Posterior cingulate gyrus (tissue), 11 donors: ENCODE measurements at regions of chr16 and their contacts with region 1.

Region 1: DNA sequence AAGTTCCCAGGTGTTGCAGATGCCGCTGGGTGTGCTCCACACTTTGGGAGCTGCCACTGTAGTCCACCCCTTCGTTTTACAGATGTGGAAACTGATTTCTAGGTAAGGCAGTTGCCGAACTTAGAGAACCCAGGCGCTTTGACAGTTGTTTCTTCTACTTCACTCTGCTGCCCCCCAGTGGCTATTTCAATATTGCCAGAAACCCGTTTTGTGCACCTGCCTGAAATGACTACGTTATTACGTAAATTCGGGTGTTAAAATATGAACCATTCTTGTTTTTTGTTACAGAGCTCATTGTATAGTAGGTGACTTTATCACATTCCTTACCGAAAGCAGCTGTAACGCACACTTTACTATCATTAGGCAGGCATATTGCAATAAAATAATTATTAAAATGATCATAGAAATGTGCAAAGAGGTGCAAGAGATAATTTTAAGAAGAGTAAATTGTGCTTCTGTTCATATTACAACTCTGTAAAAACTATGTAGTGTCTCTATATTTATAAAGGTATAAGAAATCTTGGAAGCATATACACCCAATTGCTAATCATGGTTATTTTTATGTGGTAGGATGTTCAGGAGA is 44.9 kb downstream of the OTOA start:
- DNase-seq: peak in 8 of 10 donors; percentile 27 to 86 (median 72)

Region 2: GRCh38 chr16:21584817-21585216 is 123.8 kb before region 1 on chr16:
- intact Hi-C with region 1: loop called (anchors 1 kb)
- DNase-seq: peak in 1 of 10 donors; percentile 27

Region 3: GRCh38 chr16:21656795-21657768 is 51.5 kb before region 1 on chr16:
- intact Hi-C with region 1: loop called (anchors 5 kb)
- DNase-seq: peak in 1 of 10 donors; percentile 23